Adrenal gland (tissue), 19 donors: ENCODE measurements at regions of chr10 and their contacts with region 1.

Region 1: DNA sequence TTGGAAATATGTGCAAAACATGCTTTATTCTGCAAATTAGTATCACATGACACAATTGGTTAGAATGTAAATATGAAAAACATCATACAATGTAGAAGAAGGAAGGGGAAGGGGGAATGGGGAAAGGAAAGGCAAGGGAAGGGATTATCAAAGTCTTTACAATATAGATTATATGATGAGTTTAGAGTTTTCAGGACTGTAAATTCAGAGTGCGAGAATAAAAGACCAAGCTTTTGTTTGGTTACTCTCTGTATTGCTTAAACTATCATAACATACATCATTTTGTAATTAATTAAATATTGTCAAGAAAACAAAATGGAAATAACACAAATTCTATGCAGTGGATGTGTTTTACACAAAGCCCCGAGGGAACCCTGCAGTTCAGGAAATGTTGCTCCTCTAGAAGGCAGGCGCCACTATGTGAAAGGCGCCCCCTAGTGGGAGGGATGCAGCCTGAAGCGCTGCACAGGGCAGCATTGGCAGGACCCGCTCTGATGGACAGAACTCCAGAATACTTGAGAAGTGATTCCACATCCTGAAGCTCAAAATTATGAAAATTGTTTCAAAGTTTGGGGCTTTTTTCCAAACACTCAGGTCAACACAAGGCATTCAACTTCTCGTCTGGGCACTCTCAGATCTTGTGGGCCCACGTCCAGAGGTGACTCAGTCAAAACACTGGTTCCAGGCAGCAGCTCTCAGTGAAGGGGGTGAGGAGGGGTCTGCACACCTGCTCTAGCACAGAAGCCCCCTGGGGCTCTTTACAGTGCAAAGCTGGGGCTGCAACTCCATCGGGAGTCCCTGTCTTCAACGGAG is 31.6 kb upstream of the TMEM254 start:
- DNase-seq: peak; percentile 62 to 85 (median 77)
- H3K4me3 ChIP-seq: no peak overlapping the region
- H3K27ac ChIP-seq: no peak overlapping the region
- H3K4me1 ChIP-seq: no peaks in the 10 kb centered on the region
- H3K27me3 ChIP-seq: no peaks in the 10 kb centered on the region
- CTCF ChIP-seq: peak; percentile 54 to 93 (median 74)
- POLR2A ChIP-seq: no peak

Region 2: GRCh38 chr10:79542626-79543025 is 504.2 kb before region 1 on chr10:
- intact Hi-C with region 1: loop called in 1 of 2 experiments (anchors 10 kb)
- DNase-seq: no peak
- H3K4me3 ChIP-seq: no peak overlapping the region
- H3K27ac ChIP-seq: no peak overlapping the region
- H3K4me1 ChIP-seq: no peaks in the 10 kb centered on the region
- H3K27me3 ChIP-seq: no peaks in the 10 kb centered on the region
- CTCF ChIP-seq: no peak
- POLR2A ChIP-seq: no peak

Region 3: DNA sequence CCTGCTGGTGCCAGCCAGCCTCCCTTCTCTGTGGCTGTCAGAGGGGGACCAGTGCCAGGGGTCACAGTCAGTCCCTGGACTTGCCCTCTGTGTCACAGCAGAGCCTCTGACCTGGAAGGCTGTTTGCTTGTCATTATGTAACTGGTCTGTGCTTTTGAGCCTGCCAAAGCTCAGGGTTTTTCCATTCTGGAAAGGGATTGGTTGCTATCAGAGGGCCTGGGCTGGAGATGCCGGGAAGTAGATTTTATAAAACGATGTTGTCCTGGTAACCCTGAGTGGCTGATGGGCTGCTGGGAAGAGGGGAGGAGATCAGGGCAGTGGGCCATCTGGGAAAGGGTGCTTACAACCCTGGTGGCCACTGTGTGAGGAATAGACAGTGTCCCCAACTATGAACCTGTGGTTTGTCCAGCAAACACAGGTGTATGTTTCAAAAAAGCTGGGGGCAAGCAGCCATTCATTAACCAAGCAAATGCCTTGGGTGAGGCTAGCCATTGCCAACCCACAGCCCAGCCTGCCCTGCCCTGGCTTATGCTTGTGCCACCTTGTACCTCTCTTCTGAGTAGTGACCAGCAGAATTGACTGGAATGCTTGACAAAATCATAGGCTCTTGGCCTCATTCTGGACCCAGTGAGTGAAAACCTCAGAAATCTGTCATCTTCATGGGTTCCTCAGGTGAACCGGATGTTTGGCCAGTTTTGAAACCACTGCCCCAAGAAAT is 119.6 kb before region 1 on chr10:
- intact Hi-C with region 1: no loop called
- DNase-seq: peak in 6 of 7 donors; percentile 23 to 88 (median 68)
- H3K4me3 ChIP-seq: no peak overlapping the region
- H3K27ac ChIP-seq: peak overlapping the region in 2 of 5 donors; percentile 53 to 64
- H3K4me1 ChIP-seq: no peaks in the 10 kb centered on the region
- H3K27me3 ChIP-seq: peaks cover 4% of the 10 kb centered on the region
- CTCF ChIP-seq: peak in 2 of 6 experiments; percentile 8 to 10
- POLR2A ChIP-seq: no peak